ENCODE measurements at regions of chr19 and their contacts with region 1.

Region 1: DNA sequence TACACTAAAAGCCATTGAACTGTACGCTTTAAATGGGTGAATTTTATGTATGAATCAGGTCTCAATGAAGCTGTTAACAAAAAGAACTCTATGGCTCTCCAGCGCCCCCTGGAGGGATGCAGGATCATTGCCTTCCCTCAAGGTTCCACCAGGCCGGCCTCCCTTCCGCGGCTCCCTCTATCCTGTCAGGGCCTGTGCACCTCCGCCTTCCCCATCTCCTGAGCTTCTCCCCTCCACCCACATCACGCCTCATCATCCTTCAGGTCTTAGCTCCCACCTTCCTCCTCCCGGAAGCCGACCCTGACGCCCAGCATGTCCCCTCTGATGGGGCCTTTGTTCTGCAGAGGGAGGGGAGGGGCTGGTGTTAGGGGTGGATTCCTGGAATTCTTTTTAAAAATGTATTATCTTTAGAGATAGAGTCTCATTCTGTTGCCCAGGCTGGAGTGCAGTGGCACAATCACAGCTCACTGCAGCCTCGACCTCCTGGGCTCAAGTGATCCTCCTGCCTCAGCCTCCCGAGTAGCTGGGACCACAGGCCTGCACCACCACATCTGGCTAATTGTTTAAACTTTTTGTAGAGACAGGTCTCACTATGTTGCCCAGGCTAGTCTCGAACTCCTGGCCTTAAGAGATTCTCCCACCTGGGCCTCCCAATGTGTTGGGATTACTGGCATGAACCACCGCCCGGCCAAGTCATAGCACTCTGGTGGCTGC is 27.7 kb downstream of the MEIS3 start:
- DNase-seq: peak; percentile 37 to 93 (median 70)
- ATAC-seq: peak; percentile 87
- H3K4me3 ChIP-seq: no peak overlapping the region
- H3K27ac ChIP-seq: no peak overlapping the region
- H3K4me1 ChIP-seq: peaks cover 0 to 46% of the 10 kb centered on the region in 2 donors
- H3K27me3 ChIP-seq: peaks cover 0 to 8% of the 10 kb centered on the region in 2 donors
- CTCF ChIP-seq: peak; percentile 93 to 96

Region 2: GRCh38 chr19:47302249-47302648 is 89.4 kb before region 1 on chr19:
- intact Hi-C with region 1: loop called in 1 of 2 experiments (anchors 5 kb)
- DNase-seq: no peak
- ATAC-seq: no peak
- H3K4me3 ChIP-seq: no peak overlapping the region
- H3K27ac ChIP-seq: peak overlapping the region in 1 of 2 donors; percentile 53
- H3K4me1 ChIP-seq: peaks cover 0 to 23% of the 10 kb centered on the region in 2 donors
- H3K27me3 ChIP-seq: no peaks in the 10 kb centered on the region
- CTCF ChIP-seq: no peak

Region 3: GRCh38 chr19:47436712-47437401 is 45.2 kb after region 1 on chr19:
- intact Hi-C with region 1: no loop called
- DNase-seq: peak in 3 of 4 donors; percentile 72 to 92 (median 75)
- ATAC-seq: peak; percentile 99
- H3K4me3 ChIP-seq: no peak overlapping the region
- H3K27ac ChIP-seq: no peak overlapping the region
- H3K4me1 ChIP-seq: peaks cover 0 to 3% of the 10 kb centered on the region in 2 donors
- H3K27me3 ChIP-seq: peaks cover under 1 to 89% of the 10 kb centered on the region in 2 donors
- CTCF ChIP-seq: peak; percentile 83 to 89

Measured in left lung (tissue), 14 donors.